ENCODE measurements at regions of chr1 and their contacts with region 1.

Region 1: DNA sequence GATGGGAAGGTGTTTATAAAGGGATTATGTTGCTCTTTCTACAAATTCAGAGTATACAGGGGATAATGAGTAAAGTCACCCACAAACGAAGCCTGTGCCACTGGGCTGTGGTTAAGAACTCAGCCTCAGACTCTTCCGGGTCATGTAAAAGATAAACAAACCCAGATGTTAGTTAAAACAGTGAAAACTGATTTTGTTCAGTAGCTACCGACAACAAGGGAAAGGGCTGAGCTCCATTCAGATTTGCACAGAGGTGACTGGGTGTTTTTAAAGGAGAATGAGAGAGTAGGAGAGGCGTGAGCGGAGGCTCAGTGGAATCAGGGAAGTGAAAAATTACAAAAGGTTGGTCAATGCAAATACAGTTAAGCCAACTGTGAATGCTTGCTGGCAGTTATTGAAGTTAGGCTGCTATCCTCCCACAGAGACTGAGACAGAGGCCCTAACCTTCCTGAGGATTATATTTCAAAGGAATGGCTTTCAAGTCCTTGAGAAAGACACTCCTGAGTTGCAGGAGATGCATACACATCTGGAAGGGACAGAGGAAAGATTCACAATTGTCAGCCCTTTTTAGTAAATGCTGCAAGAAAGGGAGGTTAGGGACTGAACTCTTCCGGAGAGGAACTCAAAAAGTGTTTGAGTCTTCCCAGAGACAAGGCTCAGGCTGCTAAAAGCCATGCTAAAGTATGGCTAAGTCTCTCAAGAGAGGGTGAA is 29.9 kb upstream of the SAMD13 start:
- DNase-seq: peak; percentile 18
- H3K4me3 Mint-ChIP-seq: peak overlapping the region; percentile 27
- H3K27ac Mint-ChIP-seq: peak overlapping the region; percentile 87
- H3K4me1 Mint-ChIP-seq: peaks cover 60% of the 10 kb centered on the region
- H3K27me3 Mint-ChIP-seq: no peaks in the 10 kb centered on the region
- CTCF ChIP-seq: no peak

Region 2: GRCh38 chr1:84365225-84366221 is 93.9 kb after region 1 on chr1:
- CTCF ChIA-PET with region 1: no interaction called
- intact Hi-C with region 1: loop called (anchors 10 kb)
- DNase-seq: peak; percentile 76
- H3K4me3 Mint-ChIP-seq: no peak overlapping the region
- H3K27ac Mint-ChIP-seq: peak overlapping the region; percentile 89
- H3K4me1 Mint-ChIP-seq: peaks cover 31% of the 10 kb centered on the region
- H3K27me3 Mint-ChIP-seq: no peaks in the 10 kb centered on the region
- CTCF ChIP-seq: no peak

Measured in Calu3 (cell line).